Sciatic nerve (tissue), 2 donors: ENCODE measurements at regions of chr1 and their contacts with region 1.

Region 1: GRCh38 chr1:157090196-157090647 is 9.4 kb downstream of the ETV3L start:
- DNase-seq: peak; percentile 97
- ATAC-seq: peak; percentile 93

Region 2: DNA sequence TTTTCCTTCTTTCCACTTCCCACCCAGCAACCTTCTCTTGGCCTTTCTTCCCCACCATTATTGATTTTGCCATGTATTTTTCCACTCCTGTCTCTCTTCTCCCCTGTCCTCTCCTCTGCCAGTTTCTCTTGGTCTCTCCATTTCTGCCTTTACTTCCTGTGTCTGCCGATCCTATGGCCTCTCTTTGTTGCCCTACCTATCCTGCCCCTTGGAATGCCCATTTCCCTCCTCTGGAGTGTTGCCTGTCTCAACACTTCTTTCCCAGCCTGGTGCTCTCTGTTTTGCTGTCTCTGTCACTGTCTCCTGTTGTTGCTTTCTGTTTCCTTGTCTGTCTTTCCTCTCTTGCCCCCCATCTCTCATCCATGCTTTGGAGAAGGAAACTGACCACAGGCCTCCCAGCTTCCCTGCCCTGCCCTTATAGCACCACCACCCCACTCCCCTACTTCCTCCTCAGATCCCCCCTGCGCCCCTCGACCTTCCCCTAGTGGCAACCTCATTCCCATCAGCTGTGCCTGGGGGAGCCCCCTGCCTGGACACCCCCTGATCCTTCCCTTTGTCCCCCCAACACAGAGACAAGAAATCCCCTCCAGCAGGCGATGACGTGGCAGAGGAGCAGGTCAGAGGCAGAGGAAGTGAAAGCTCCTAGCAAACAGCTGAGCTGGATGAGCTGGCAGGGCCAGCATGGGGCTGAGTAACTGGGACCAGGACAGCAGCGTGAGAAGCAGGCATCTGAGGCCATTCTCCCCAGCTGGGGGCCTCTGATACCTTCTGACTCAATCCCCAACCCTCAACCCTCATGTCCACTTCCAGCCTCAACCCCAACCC is 16.0 kb after region 1 on chr1:
- intact Hi-C with region 1: no loop called
- DNase-seq: peak; percentile 62
- ATAC-seq: peak; percentile 76

Region 3: DNA sequence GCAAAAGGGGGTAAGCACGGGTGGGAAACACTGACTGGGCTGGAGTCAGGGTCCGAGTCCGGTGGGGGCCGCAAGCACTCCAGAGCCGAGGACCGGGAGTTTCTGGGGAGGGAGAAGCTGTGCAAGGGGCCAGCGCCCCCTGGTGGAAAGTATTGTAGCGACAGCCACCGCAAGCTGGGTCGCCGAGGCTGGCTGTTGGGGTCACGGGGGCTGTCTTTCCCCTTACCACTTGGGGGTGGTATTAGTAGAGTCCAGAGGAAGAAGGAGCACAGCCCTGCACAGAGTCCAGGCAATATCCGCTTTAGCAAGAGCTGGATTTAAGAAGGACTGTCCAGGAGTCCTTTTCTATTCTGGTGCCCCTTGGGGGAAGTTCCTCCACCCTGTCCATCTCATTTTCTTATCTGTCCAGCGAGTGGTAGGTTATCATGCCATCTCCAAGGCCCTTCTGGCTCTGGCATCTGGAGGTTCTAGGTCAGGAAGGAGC is 65.9 kb after region 1 on chr1:
- intact Hi-C with region 1: loop called (anchors 5 kb)
- DNase-seq: peak; percentile 89
- ATAC-seq: peak; percentile 87